GM12878 (cell line): ENCODE measurements at regions of chr1 and their contacts with region 1.

Region 1: GRCh38 chr1:8560611-8561544 is 243.0 kb downstream of the SLC45A1 start:
- DNase-seq: no peak
- ATAC-seq: peak; percentile 78
- H3K4me3 ChIP-seq: no peak overlapping the region
- H3K27ac ChIP-seq: no peak overlapping the region; the same call in 1 of the 2 replicates
- H3K4me1 ChIP-seq: peaks cover 15% of the 10 kb centered on the region
- H3K27me3 ChIP-seq: no peaks in the 10 kb centered on the region
- CTCF ChIP-seq: peak; percentile 83 to 88 (median 87)
- EP300 ChIP-seq: no peak
- POLR2A ChIP-seq: no peak
- RAD21 ChIP-seq: peak; percentile 96

Region 2: GRCh38 chr1:7745791-7746190 is 815.1 kb before region 1 on chr1:
- CTCF ChIA-PET with region 1: no interaction called
- POLR2A ChIA-PET with region 1: no interaction called
- RAD21 ChIA-PET with region 1: no interaction called
- SMC1A ChIA-PET with region 1: no interaction called
- in situ Hi-C with region 1: no loop called
- intact Hi-C with region 1: no loop called
- DNase-seq: no peak
- ATAC-seq: no peak
- H3K4me3 ChIP-seq: no peak overlapping the region
- H3K27ac ChIP-seq: no peak overlapping the region
- H3K4me1 ChIP-seq: no peaks in the 10 kb centered on the region
- H3K27me3 ChIP-seq: 0 out of 4 replicates have a peak, but pooled peaks cover 0 to 1% of the 10 kb centered on the region in 2 experiments
- CTCF ChIP-seq: no peak
- EP300 ChIP-seq: no peak
- POLR2A ChIP-seq: no peak
- RAD21 ChIP-seq: no peak

Region 3: GRCh38 chr1:8439015-8439702 is 121.7 kb before region 1 on chr1:
- CTCF ChIA-PET with region 1: no interaction called
- POLR2A ChIA-PET with region 1: no interaction called
- RAD21 ChIA-PET with region 1: no interaction called
- SMC1A ChIA-PET with region 1: no interaction called
- in situ Hi-C with region 1: no loop called
- intact Hi-C with region 1: no loop called
- DNase-seq: no peak
- ATAC-seq: peak; percentile 95
- H3K4me3 ChIP-seq: no peak overlapping the region
- H3K27ac ChIP-seq: no peak overlapping the region
- H3K4me1 ChIP-seq: peaks cover 7% of the 10 kb centered on the region
- H3K27me3 ChIP-seq: no peaks in the 10 kb centered on the region
- CTCF ChIP-seq: no peak
- EP300 ChIP-seq: no peak
- POLR2A ChIP-seq: no peak
- RAD21 ChIP-seq: no peak

Region 4: DNA sequence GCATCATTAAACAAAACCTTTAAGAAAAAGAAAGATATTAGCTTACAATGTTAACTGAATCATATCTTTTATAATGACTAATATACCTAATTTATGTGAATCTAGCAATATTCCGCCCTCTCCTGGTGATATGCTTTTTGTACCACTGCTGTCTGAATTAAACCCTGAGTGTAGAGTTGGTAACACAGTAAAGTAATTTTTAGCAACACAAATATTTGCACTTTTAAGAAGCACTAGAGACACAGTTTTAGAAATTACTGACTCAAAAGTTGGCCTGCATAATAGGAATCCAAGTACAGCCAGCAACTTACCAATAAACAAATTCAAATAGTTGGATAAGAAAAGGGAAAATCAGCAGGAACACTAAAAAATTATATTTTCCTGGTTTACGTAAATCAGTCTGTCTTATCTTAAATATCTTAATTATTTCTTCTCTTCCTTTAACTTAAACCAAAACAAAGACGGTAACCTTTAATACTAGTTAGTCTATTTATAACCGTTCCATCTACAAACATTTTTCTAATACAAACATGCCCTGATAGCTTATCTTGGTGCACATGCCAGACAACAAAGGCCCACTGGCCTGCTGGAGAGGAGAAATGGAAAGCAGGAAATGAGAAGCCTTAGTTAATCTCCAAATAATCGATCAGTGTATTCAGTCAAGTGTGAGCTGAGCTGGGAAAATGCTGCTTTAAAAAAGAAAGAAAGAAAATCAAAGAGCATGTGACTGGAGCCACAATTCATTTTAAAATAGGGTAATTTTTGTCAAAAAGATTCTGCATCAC is 10.5 kb after region 1 on chr1:
- CTCF ChIA-PET with region 1: interaction called, 39 read pairs
- POLR2A ChIA-PET with region 1: interaction called, 5 read pairs
- RAD21 ChIA-PET with region 1: interaction called, 12 read pairs
- SMC1A ChIA-PET with region 1: interaction called, 20 read pairs
- in situ Hi-C with region 1: no loop called
- intact Hi-C with region 1: no loop called
- DNase-seq: no peak
- ATAC-seq: 0 out of 3 replicates have a peak, but pooled peaks have one; percentile 36
- H3K4me3 ChIP-seq: no peak overlapping the region
- H3K27ac ChIP-seq: no peak overlapping the region
- H3K4me1 ChIP-seq: no peaks in the 10 kb centered on the region
- H3K27me3 ChIP-seq: no peaks in the 10 kb centered on the region
- CTCF ChIP-seq: peak in 2 of 3 experiments; percentile 10 to 16; a peak in 1 of 6 replicates
- EP300 ChIP-seq: no peak
- POLR2A ChIP-seq: no peak
- RAD21 ChIP-seq: 0 out of 2 replicates have a peak, but pooled peaks have one; percentile 10

Region 5: DNA sequence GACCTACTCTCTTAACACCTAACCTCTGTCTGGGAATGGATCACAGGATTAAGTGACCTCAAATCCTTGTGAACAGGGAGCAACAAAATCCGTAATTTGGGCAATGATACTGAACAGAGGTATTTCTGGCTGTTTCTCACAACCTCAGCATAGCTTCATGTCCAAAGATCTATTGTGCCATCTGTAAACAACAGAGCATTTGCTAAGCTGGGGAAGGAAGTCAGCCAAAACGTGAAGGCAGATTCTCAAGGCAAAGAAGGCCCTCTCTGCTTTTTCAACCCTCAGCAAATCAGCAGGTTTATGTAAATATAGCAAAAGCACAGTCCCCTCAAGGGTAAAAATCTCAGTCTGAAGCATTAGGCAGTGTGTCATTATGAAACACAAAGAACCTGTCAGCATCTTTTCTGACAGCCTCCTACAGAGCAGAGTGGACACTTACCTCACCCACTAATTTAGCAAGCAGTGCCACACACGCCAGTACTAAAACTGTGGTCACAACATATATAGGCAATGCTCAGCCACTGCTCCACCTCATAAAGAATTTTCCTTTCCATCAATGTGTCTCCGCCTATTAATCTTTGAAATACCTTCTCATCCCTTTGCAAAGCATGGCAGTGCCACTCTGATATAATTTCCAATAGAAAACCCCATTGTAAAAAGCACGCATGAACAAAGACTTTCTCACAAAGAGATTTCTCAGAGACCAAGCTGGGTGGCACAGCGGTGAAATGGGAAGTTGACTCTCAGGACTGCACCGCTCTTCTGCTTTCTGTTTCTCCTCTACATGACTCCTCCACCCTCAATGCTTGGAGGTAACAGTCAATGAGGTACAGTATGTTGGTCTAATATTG is 68.6 kb after region 1 on chr1:
- CTCF ChIA-PET with region 1: interaction called, 31 read pairs
- POLR2A ChIA-PET with region 1: no interaction called
- RAD21 ChIA-PET with region 1: interaction called, 4 read pairs
- SMC1A ChIA-PET with region 1: interaction called, 38 read pairs
- in situ Hi-C with region 1: no loop called
- intact Hi-C with region 1: no loop called
- DNase-seq: peak; percentile 91
- ATAC-seq: peak; percentile 95
- H3K4me3 ChIP-seq: peak overlapping the region; percentile 43; the same call in 1 of the 2 replicates
- H3K27ac ChIP-seq: peak overlapping the region; percentile 86
- H3K4me1 ChIP-seq: peaks cover 42% of the 10 kb centered on the region
- H3K27me3 ChIP-seq: no peaks in the 10 kb centered on the region
- CTCF ChIP-seq: no peak
- EP300 ChIP-seq: peak; percentile 24 to 52; a peak in 2 of 4 replicates
- POLR2A ChIP-seq: 0 out of 2 replicates have a peak, but pooled peaks have one; percentile 15
- RAD21 ChIP-seq: no peak

Region 6: DNA sequence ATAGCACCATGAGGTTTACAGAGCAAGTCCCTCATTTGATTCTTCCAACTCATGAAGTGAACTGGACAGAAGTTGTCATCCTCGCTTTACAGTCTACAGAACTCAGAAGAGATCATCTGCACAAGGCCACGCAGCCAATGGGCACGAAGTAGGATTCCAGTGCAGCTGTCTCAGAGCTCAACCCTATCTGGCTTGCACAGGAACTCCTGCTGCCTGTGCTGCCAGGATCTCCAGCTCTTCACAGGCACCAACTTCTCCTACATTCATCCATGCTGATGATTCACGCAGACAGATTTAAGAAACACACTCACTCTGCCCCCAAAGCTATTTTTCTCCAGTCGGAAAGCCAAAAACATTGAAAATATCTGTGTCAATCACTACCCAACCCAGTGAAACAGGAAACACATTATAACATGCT is 99.5 kb after region 1 on chr1:
- CTCF ChIA-PET with region 1: interaction called, 50 read pairs
- POLR2A ChIA-PET with region 1: interaction called, 3 read pairs
- RAD21 ChIA-PET with region 1: interaction called, 19 read pairs
- SMC1A ChIA-PET with region 1: interaction called, 258 read pairs
- in situ Hi-C with region 1: no loop called
- intact Hi-C with region 1: no loop called
- DNase-seq: no peak
- ATAC-seq: peak; percentile 41
- H3K4me3 ChIP-seq: peak overlapping the region; percentile 56; the same call in 1 of the 2 replicates
- H3K27ac ChIP-seq: peak overlapping the region; percentile 79
- H3K4me1 ChIP-seq: peaks cover 47% of the 10 kb centered on the region
- H3K27me3 ChIP-seq: no peaks in the 10 kb centered on the region
- CTCF ChIP-seq: no peak
- EP300 ChIP-seq: no peak
- POLR2A ChIP-seq: peak; percentile 53
- RAD21 ChIP-seq: no peak

Region 7: DNA sequence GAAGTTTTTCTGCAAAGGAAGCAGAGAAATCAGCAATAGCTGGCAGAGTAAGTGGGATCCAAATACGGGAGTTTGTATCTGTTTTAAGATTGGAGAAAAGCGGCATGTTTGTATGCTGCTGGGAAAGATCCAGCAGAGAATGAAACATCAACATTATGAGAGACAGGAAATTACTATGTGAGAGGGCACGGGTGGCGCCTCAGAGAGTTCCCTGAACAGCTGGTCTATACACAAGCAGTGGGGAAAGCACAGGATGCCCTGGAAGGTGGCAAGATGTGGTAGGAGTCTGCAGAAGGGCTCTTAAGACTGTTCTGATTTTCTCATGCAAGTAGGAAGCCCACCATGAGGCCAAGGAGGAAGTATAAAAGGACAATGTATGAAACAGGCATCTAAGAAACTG is 126.2 kb after region 1 on chr1:
- CTCF ChIA-PET with region 1: interaction called, 23 read pairs
- POLR2A ChIA-PET with region 1: interaction called, 3 read pairs
- RAD21 ChIA-PET with region 1: interaction called, 14 read pairs
- SMC1A ChIA-PET with region 1: interaction called, 11 read pairs
- in situ Hi-C with region 1: no loop called
- intact Hi-C with region 1: no loop called
- DNase-seq: no peak
- ATAC-seq: peak; percentile 72
- H3K4me3 ChIP-seq: no peak overlapping the region
- H3K27ac ChIP-seq: peak overlapping the region; percentile 5; the same call in 1 of the 2 replicates
- H3K4me1 ChIP-seq: peaks cover 23% of the 10 kb centered on the region
- H3K27me3 ChIP-seq: no peaks in the 10 kb centered on the region
- CTCF ChIP-seq: no peak
- EP300 ChIP-seq: no peak
- POLR2A ChIP-seq: no peak
- RAD21 ChIP-seq: no peak

Region 8: GRCh38 chr1:8718850-8719361 is 158.0 kb after region 1 on chr1:
- CTCF ChIA-PET with region 1: interaction called, 211 read pairs
- POLR2A ChIA-PET with region 1: interaction called, 4 read pairs
- RAD21 ChIA-PET with region 1: interaction called, 107 read pairs
- SMC1A ChIA-PET with region 1: interaction called, 25 read pairs
- in situ Hi-C with region 1: no loop called
- intact Hi-C with region 1: no loop called
- DNase-seq: no peak
- ATAC-seq: peak; percentile 58
- H3K4me3 ChIP-seq: no peak overlapping the region
- H3K27ac ChIP-seq: no peak overlapping the region
- H3K4me1 ChIP-seq: peaks cover 23% of the 10 kb centered on the region
- H3K27me3 ChIP-seq: no peaks in the 10 kb centered on the region
- CTCF ChIP-seq: peak; percentile 15 to 40 (median 22); a peak in 4 of 6 replicates
- EP300 ChIP-seq: no peak
- POLR2A ChIP-seq: no peak
- RAD21 ChIP-seq: peak; percentile 23; the same call in 1 of the 2 replicates

Region 9: GRCh38 chr1:8878448-8879347 is 317.8 kb after region 1 on chr1 and contains the start of gene ENO1:
- CTCF ChIA-PET with region 1: no interaction called
- POLR2A ChIA-PET with region 1: no interaction called
- RAD21 ChIA-PET with region 1: no interaction called
- SMC1A ChIA-PET with region 1: no interaction called
- in situ Hi-C with region 1: no loop called
- intact Hi-C with region 1: no loop called
- DNase-seq: peak; percentile 98
- ATAC-seq: peak; percentile 80
- H3K4me3 ChIP-seq: peak within 1 kb of the TSS; percentile 89
- H3K27ac ChIP-seq: peak within 1 kb of the TSS; percentile 99
- H3K4me1 ChIP-seq: peaks cover 15% of the 10 kb centered on the region
- H3K27me3 ChIP-seq: no peaks in the 10 kb centered on the region
- CTCF ChIP-seq: no peak
- EP300 ChIP-seq: 0 out of 4 replicates have a peak, but pooled peaks have one; percentile 6 to 8
- POLR2A ChIP-seq: peak; percentile 95
- RAD21 ChIP-seq: no peak
- polyA plus RNA-seq, gene ENO1: 3,300 to 4,219 TPM